ENCODE measurements at regions of chr9 and their contacts with region 1.

Region 1: GRCh38 chr9:33404788-33405362 is 2.5 kb upstream of the AQP7 start:
- DNase-seq: no peak
- ATAC-seq: peak; percentile 42 to 67; a peak in 3 of 6 replicates
- H3K4me3 ChIP-seq: no peak overlapping the region
- H3K27ac ChIP-seq: peak overlapping the region; percentile 27 to 49; a peak in 4 of 6 replicates
- H3K4me1 ChIP-seq: peaks cover 30% of the 10 kb centered on the region
- CTCF ChIP-seq: no peak
- EP300 ChIP-seq: no peak
- POLR2A ChIP-seq: no peak
- RAD21 ChIP-seq: no peak

Region 2: DNA sequence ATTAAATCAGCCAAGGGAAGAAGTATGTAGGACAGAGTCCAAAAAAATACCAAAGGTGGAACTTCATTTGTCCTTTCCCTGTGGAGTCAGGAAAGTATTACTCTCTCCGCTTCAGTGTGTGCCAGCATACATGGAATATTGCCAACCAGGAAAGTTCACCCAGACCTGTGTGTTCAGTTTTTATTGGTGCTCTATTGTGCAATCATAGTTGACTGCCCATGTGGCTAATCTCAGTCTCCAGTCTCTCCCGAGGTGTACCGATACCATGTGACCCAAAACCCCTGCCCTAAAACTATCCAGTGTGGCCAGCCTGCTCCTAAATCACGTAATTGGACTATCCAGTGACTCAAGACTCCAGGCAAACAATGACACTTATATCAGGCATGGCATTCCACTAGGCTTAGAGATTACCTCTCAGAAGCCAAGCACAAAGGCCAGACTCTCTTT is 75.7 kb before region 1 on chr9:
- CTCF ChIA-PET with region 1: no interaction called
- POLR2A ChIA-PET with region 1: no interaction called
- DNase-seq: peak; percentile 81 to 97
- ATAC-seq: peak; percentile 97 to 99
- H3K4me3 ChIP-seq: no peak overlapping the region
- H3K27ac ChIP-seq: peak overlapping the region; percentile 85 to 90
- H3K4me1 ChIP-seq: peaks cover 42% of the 10 kb centered on the region
- CTCF ChIP-seq: no peak
- EP300 ChIP-seq: peak; percentile 78 to 87; a peak in 3 of 5 replicates
- POLR2A ChIP-seq: no peak
- RAD21 ChIP-seq: peak in 1 of 2 experiments; percentile 23; a peak in 1 of 5 replicates

Region 3: DNA sequence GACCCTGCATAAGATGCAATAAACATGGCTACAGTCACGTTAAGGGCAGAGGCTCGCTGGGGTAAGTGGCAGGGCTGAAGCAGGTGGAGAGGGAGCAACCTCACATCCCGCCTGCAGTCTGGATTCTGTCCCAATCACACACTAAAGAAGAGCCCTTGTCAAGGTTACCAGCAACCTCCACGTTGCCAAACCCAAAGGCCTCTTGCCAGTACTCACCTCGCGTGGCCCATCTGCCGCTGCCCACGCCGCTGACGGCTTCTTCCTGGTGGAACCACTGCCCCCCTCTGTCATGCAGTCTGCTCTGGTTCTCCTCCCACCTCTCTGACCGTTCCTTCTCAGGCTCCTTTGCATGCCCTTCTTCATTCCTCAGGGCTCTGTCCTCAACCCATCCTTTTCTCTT is 11.3 kb before region 1 on chr9:
- CTCF ChIA-PET with region 1: interaction called, 17 read pairs
- POLR2A ChIA-PET with region 1: interaction called, 3 read pairs
- DNase-seq: no peak
- ATAC-seq: no peak
- H3K4me3 ChIP-seq: no peak overlapping the region
- H3K27ac ChIP-seq: no peak overlapping the region; a peak in 1 of 6 replicates
- H3K4me1 ChIP-seq: peaks cover 32% of the 10 kb centered on the region
- CTCF ChIP-seq: no peak
- EP300 ChIP-seq: no peak
- POLR2A ChIP-seq: no peak
- RAD21 ChIP-seq: no peak

Region 4: DNA sequence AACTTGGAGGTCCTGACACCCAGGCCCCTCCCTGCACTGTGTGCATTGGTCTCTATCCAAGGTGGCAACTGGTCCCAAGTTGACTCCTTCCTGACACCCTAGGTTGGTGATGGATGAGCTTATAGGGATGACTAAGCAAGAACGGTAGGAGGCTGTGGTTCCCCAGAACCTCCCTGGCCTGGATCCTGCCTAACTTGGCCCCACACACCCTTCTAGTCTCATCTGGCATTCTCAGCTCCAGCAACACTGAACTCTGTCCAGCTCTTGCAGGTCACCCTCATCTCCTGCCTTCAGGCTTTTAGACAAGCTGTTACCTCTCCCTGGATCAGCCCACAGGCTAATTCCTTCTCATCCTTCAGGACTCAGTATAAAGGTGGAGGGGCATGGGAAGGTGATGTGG is 26.1 kb after region 1 on chr9:
- CTCF ChIA-PET with region 1: interaction called, 11 read pairs
- POLR2A ChIA-PET with region 1: no interaction called
- DNase-seq: peak in 1 of 2 experiments; percentile 72
- ATAC-seq: peak; percentile 46 to 72; a peak in 3 of 6 replicates
- H3K4me3 ChIP-seq: no peak overlapping the region
- H3K27ac ChIP-seq: peak overlapping the region; percentile 52 to 73
- H3K4me1 ChIP-seq: peaks cover 28% of the 10 kb centered on the region
- CTCF ChIP-seq: no peak
- EP300 ChIP-seq: no peak
- POLR2A ChIP-seq: no peak
- RAD21 ChIP-seq: no peak

Region 5: GRCh38 chr9:33446946-33447798 is 42.3 kb after region 1 on chr9 and contains the start of gene AQP3:
- CTCF ChIA-PET with region 1: interaction called, 68 read pairs
- POLR2A ChIA-PET with region 1: no interaction called
- DNase-seq: peak; percentile 63 to 80
- ATAC-seq: peak; percentile 88 to 92
- H3K4me3 ChIP-seq: peak within 1 kb of the TSS; percentile 42
- H3K27ac ChIP-seq: peak within 1 kb of the TSS; percentile 43 to 80
- H3K4me1 ChIP-seq: peaks cover 36% of the 10 kb centered on the region
- CTCF ChIP-seq: peak; percentile 51
- EP300 ChIP-seq: no peak
- POLR2A ChIP-seq: peak; percentile 14; the same call in 1 of the 2 replicates
- RAD21 ChIP-seq: peak; percentile 4 to 55; a peak in 4 of 5 replicates
- polyA plus RNA-seq, gene AQP3: 18.8 and 21.7 TPM in 2 replicates

Region 6: DNA sequence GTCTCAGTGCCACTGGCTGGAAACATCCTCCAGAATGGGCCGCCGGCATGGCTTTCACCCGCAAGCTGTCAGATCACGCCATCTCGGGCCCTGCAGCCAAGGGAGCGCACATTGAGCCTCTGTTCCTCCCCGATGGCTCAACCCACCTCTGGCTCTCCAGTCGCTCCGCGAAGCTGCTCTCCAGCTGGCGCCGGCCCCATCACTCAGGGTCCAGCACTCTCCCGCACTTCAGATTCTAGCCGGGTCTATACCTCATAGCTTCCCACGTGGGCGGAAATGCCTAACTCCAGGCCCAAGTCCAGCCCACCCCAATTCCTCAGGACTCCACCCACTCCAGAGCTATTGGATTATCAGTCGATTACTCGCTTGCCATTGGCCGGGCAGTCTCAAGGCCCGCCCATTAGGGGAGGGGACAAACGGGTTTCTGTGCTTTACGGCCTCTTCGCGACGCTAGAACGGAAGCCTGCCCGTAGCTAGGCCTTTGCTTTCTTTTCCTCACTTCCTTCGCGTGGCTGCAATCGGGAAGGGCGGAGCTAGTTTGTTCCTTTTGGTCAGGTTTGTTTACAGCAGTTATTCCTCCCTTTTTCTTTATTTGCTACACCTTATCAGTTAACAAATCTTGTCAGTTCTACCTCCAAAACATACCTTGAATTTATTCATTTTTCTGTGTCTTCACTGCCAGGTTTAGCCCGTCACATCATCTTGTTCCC is 68.9 kb after region 1 on chr9 and contains the start of gene NOL6:
- CTCF ChIA-PET with region 1: interaction called, 299 read pairs
- POLR2A ChIA-PET with region 1: interaction called, 5 read pairs
- DNase-seq: peak; percentile 97 to 99
- ATAC-seq: peak; percentile 99 to 100
- H3K4me3 ChIP-seq: peak within 1 kb of the TSS; percentile 88
- H3K27ac ChIP-seq: peak within 1 kb of the TSS; percentile 75 to 88
- H3K4me1 ChIP-seq: peaks cover 14% of the 10 kb centered on the region
- CTCF ChIP-seq: no peak
- EP300 ChIP-seq: no peak
- POLR2A ChIP-seq: peak; percentile 70
- RAD21 ChIP-seq: no peak
- polyA plus RNA-seq, gene NOL6: 49.5 and 56.6 TPM in 2 replicates

Region 7: DNA sequence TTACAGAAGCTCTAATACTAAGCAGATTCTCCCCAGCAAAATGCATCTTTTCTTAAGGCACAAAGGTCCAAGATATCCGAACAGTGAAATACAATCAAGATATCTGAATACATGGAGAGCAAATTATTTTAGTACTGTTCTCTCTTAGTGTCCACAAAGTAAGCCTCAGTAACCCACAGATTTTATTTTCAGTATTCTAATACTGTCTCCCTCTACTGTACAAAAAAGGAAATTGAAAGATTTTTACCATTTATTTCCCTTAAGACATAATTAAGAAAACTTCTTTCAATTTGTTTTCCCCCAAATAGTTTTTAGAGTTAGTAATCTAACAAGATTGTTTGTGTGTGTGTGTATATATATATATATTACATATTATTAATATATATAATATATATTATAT is 93.5 kb after region 1 on chr9:
- CTCF ChIA-PET with region 1: interaction called, 20 read pairs
- POLR2A ChIA-PET with region 1: no interaction called
- DNase-seq: no peak
- ATAC-seq: no peak
- H3K4me3 ChIP-seq: no peak overlapping the region
- H3K27ac ChIP-seq: peak overlapping the region in 1 of 2 experiments; percentile 46; a peak in 1 of 6 replicates
- H3K4me1 ChIP-seq: peaks cover 13% of the 10 kb centered on the region
- CTCF ChIP-seq: peak; percentile 36; the same call in 1 of the 3 replicates
- EP300 ChIP-seq: no peak
- POLR2A ChIP-seq: no peak
- RAD21 ChIP-seq: peak; percentile 40 to 42; a peak in 3 of 5 replicates

Region 8: GRCh38 chr9:33517373-33517772 is 112.5 kb after region 1 on chr9:
- CTCF ChIA-PET with region 1: interaction called, 12 read pairs
- POLR2A ChIA-PET with region 1: no interaction called
- DNase-seq: peak; percentile 40 to 65
- ATAC-seq: peak; percentile 80 to 82
- H3K4me3 ChIP-seq: no peak overlapping the region
- H3K27ac ChIP-seq: peak overlapping the region in 1 of 2 experiments; percentile 61; a peak in 2 of 6 replicates
- H3K4me1 ChIP-seq: peaks cover 36% of the 10 kb centered on the region; the same call in 2 of the 3 replicates
- CTCF ChIP-seq: peak; percentile 72
- EP300 ChIP-seq: no peak
- POLR2A ChIP-seq: no peak
- RAD21 ChIP-seq: peak; percentile 43 to 47; a peak in 3 of 5 replicates

Measured in A549 (cell line).